Aorta (tissue), 5 donors: ENCODE measurements at regions of chr9 and their contacts with region 1.

Region 1: DNA sequence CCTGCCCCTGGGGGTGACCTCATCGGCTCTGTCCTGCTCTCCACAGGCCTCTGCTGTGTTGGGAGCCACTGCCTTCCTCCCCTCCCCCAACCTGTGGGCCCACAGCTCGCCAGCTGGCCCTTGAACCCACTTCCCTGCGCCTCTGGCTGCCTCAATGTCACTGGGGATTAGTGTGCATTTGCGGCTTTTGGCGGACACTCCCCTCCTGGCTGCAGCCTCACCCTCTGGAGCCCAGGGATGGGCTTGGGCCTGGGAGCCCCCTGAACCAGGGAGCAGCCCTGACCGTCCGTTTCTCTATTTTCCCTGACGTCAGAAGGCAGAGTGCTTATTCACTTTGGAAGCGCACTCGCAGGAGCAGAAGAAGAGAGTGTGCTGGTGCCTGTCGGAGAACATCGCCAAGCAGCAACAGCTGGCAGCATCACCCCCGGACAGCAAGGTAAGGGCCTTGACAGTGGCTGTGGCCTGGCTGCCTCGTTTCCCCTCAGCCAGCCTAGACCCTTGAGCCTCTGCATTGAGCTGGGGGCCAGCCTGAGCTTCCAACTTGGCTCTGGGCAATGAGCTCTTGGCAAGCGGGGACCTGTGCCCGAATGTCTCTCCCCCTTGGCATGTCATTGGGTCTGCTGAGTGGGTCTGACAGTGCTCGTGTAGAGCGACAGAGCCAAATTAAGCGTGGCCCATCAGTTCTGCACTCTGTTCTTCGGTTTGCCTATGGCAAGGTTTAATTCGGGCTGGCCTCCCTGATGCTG is 73.1 kb downstream of the RGS3 start:
- DNase-seq: peak; percentile 86 to 88
- ATAC-seq: peak; percentile 86
- H3K4me3 ChIP-seq: no peak overlapping the region
- H3K27ac ChIP-seq: peak overlapping the region; percentile 69 to 74
- H3K4me1 ChIP-seq: no peaks in the 10 kb centered on the region
- H3K27me3 ChIP-seq: no peaks in the 10 kb centered on the region

Region 2: DNA sequence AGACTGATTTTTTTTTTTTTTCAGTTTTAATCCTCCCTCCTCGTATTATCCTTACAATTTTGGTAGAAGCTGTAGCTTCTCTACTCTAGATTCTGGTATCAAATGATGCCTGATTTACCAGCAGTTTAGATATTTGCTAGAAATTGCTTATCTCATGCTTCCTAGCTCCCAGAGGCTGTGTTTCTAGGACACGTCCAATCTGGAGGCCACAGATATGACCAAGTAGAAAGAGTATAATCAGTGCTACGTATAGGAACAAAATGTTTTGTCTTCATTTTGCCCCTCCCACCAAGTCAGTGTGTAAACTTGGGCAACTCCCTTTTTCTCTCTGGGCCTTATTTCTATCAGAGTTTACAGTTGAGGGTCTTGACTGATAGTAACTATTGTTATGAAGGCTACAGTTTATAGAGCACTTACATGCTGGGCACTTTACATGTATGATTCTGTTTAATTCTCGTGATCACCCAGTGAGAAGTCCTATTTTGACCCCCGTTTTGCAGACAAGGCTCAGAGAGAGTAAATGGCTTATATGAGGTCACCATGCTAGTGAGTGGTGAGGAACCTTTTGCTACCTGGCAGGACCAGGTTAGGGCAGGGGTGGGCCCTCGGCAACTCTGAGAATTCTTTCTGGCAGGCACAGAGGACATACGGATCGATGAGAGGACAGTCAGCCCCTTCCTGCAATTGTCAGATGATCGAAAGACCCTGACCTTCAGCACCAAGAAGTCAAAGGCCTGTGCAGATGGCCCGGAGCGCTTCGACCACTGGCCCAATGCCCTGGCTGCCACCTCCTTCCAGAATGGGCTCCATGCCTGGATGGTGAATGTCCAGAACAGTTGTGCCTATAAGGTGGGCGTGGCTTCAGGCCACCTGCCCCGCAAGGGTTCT is 167.4 kb before region 1 on chr9:
- intact Hi-C with region 1: no loop called
- DNase-seq: no peak
- ATAC-seq: no peak
- H3K4me3 ChIP-seq: no peak overlapping the region
- H3K27ac ChIP-seq: no peak overlapping the region
- H3K4me1 ChIP-seq: peaks cover 0 to 4% of the 10 kb centered on the region in 2 donors
- H3K27me3 ChIP-seq: no peaks in the 10 kb centered on the region

Region 3: DNA sequence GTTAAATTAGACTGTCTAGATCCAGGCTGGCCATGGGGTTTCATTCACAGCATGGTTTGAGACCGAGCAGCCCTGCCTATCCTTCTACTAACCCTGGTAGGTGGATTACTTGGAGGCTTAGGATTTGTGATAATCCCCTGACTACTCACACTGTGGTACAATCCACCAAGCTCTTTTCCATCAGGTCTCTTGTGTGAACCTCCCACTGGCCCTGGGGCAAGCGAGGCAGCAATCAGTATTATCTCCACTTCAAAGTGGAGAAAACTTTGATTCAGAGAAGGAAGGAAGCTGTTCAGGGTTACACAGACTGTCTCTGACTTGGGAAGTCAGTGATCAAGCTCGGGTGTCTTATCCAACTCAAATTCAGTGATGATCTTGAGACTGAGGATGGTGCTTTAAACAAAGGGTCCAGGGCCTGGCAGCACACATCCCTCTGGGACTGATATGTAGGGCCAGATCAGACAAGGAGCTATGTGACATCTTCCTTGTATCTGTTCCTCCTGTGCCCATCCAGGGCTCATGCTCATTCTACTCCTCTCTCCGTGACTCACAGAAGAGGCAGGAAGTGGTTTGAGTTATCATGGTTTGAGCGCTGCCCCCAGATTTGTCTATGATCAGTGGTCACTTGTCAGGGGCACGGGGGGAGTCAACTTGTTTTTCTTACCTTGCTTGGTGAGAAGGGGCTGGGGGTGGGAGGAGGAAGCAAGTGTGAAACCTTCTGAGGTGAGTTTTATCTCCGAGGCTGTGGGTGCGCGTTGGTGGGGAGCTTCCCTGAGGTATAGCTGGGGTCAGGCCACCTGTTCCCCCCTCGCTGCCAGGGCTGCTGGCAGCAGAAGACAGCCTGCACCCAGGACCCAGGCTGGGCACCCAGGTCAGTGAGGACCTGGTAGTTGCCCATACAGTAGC is 24.5 kb before region 1 on chr9:
- intact Hi-C with region 1: no loop called
- DNase-seq: no peak
- ATAC-seq: no peak
- H3K4me3 ChIP-seq: no peak overlapping the region
- H3K27ac ChIP-seq: peak overlapping the region in 1 of 2 donors; percentile 24
- H3K4me1 ChIP-seq: peaks cover 0 to 2% of the 10 kb centered on the region in 2 donors
- H3K27me3 ChIP-seq: no peaks in the 10 kb centered on the region

Region 4: DNA sequence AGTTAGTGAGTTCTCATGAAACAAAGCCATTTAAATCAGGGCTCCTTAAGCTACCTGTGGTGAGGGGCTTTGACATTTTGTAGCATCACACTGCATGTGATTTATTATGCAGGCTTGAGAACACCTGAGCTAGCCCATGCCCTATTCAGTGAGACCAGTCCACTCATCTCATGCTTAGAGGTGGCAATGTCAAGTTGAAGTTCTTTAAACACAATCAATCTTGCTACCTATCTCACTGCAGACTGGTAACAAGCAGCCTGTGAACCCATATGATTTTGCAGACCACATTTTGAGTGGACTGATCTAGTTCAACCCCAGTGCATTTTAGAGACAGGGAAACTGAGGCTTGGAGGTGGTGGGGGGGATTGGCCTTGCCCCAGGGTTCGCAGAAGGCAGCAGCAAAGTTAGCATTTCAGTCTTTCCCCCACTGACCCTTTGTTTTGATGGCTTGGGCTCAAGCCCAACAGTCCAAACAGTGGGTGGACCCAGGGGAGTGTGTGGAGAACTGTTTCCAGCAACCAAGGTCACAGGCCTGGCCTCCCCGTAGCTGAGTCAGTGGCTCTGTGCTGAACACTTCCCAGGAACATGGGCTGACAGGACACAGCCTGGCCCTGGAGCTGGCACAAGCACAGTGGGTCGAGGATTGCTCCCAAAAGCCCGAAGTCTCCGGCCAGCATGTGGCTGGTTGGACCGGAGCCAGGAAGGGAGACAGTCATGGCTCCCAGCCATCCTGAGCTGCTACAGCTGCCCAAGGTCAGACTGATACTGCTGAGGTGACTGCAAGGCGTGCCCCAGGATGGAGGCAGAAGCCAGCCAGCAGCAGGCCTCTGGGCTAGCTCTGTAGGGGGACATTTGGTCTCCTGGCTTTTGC is 22.2 kb after region 1 on chr9:
- intact Hi-C with region 1: no loop called
- DNase-seq: peak; percentile 93
- ATAC-seq: peak; percentile 92
- H3K4me3 ChIP-seq: no peak overlapping the region
- H3K27ac ChIP-seq: peak overlapping the region in 1 of 2 donors; percentile 65
- H3K4me1 ChIP-seq: peaks cover 0 to under 1% of the 10 kb centered on the region in 2 donors
- H3K27me3 ChIP-seq: no peaks in the 10 kb centered on the region

Region 5: GRCh38 chr9:113581865-113582697 is 45.4 kb after region 1 on chr9:
- intact Hi-C with region 1: loop called in 1 of 2 experiments (anchors 1 kb)
- DNase-seq: peak; percentile 87 to 92
- ATAC-seq: peak; percentile 78
- H3K4me3 ChIP-seq: no peak overlapping the region
- H3K27ac ChIP-seq: peak overlapping the region; percentile 59 to 87
- H3K4me1 ChIP-seq: peaks cover 6 to 7% of the 10 kb centered on the region in 2 donors
- H3K27me3 ChIP-seq: no peaks in the 10 kb centered on the region